ENCODE measurements at regions of chr1 and their contacts with region 1.

Region 1: DNA sequence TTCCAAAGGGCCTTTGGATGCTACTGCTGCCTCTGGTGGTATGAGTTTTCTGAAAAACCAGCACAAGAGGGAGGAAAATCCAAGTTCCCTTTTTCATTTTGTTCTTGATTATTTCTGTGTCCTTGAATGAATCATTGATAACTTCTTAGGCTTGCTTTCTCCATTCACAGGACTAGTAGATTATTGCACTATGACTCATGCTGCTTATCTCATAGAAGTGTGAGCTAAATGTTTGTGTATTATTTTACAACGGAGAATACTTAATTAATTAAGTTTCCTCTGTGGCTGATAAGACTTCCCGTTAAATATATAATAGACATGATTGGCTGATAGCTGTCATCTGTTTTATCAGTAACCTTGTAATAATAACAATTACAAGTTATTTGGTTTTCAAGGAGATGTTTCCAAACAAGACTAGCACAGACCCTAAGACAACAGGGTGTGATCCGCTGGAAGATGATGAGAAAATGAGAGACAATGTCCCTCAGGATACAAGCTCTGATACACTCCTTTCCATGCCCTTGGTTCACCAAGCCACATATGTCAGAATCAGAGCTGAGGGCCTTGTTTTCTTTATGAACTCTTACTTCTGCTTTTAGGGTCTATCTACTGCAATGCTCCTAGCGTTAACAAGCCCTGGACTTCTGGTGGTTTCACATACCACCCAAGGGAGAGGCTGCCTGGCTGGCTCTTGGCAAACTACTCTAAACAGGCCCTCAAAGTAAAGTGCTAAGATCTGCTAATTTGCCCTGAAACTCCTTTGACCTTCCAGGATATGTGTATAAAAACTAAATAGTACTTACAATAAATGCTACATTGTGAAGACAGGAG is 1078.3 kb downstream of the TTLL7 start:
- DNase-seq: peak; percentile 89
- H3K4me3 ChIP-seq: no peak overlapping the region
- H3K27ac ChIP-seq: peak overlapping the region; percentile 35
- H3K4me1 ChIP-seq: peaks cover 23% of the 10 kb centered on the region
- H3K27me3 ChIP-seq: peaks cover 16 to 25% of the 10 kb centered on the region in 2 experiments
- CTCF ChIP-seq: no peak
- POLR2A ChIP-seq: no peak

Region 2: DNA sequence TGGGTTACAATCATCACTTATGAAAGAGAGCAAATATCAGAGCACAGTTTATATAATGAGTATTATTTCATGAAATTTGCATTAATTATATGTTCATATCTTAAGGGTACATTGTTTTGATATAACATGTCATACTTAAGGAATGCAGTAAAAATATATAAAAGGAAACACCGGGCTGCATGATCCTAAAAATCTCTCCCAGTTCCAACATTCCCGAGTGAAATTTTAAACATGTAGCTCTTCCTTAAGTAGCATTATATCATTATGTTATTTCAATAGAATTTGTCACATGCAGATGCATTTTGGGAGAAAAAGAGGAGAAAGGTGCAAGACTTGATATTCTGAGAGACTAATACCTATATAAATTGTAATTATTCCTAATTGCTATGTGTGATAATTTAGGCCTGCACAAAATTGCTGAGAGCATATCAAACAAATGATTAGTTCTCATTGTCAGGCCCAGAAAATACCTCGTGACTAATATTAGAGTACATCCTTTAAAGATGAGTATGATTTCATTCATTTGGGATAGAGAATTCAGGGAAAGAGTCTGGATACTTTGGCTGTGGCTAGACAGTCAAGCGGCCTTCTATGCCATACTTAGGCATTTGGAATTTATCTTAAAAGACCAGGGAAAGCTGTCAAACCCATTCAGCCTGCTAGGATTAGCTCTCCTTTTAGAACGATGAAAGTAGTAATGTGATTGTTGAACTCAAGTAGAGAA is 1033.0 kb before region 1 on chr1:
- CTCF ChIA-PET with region 1: no interaction called
- POLR2A ChIA-PET with region 1: interaction called, 11 read pairs
- dilution Hi-C with region 1: no loop called
- intact Hi-C with region 1: no loop called
- DNase-seq: peak; percentile 84
- H3K4me3 ChIP-seq: no peak overlapping the region
- H3K27ac ChIP-seq: peak overlapping the region; percentile 69
- H3K4me1 ChIP-seq: peaks cover 17% of the 10 kb centered on the region
- H3K27me3 ChIP-seq: no peaks in the 10 kb centered on the region
- CTCF ChIP-seq: no peak
- POLR2A ChIP-seq: no peak

Region 3: DNA sequence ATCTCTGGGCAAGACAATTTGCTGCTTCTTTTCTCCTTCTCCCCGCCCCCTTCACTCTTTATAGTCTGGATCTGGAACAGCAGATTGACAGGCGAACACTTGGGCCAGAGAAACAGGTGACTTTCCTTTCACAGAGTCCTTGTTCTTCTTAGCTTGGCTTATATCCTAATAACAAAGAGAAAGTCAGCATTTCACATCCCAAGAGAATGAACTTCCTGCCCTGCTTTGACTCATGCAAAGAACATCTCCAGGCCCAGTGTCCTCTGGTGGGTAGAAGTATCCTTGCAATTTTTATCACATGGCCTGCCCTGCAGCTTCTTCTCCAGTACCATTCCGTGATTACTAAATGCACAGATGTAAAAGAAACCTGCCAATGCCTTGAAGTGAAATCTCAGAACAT is 355.5 kb before region 1 on chr1:
- CTCF ChIA-PET with region 1: no interaction called
- POLR2A ChIA-PET with region 1: no interaction called
- dilution Hi-C with region 1: no loop called
- intact Hi-C with region 1: loop called (anchors 5 kb)
- DNase-seq: no peak
- H3K4me3 ChIP-seq: no peak overlapping the region
- H3K27ac ChIP-seq: peak overlapping the region; percentile 22
- H3K4me1 ChIP-seq: peaks cover 11% of the 10 kb centered on the region
- H3K27me3 ChIP-seq: no peaks in the 10 kb centered on the region
- CTCF ChIP-seq: peak in 1 of 2 donors; percentile 6
- POLR2A ChIP-seq: no peak

Region 4: GRCh38 chr1:82792151-82792550 is 128.5 kb before region 1 on chr1:
- CTCF ChIA-PET with region 1: no interaction called
- POLR2A ChIA-PET with region 1: no interaction called
- dilution Hi-C with region 1: no loop called
- intact Hi-C with region 1: loop called (anchors 5 kb)
- DNase-seq: peak; percentile 83
- H3K4me3 ChIP-seq: no peak overlapping the region
- H3K27ac ChIP-seq: no peak overlapping the region
- H3K4me1 ChIP-seq: peaks cover 13% of the 10 kb centered on the region
- H3K27me3 ChIP-seq: no peaks in the 10 kb centered on the region
- CTCF ChIP-seq: no peak
- POLR2A ChIP-seq: no peak

Region 5: DNA sequence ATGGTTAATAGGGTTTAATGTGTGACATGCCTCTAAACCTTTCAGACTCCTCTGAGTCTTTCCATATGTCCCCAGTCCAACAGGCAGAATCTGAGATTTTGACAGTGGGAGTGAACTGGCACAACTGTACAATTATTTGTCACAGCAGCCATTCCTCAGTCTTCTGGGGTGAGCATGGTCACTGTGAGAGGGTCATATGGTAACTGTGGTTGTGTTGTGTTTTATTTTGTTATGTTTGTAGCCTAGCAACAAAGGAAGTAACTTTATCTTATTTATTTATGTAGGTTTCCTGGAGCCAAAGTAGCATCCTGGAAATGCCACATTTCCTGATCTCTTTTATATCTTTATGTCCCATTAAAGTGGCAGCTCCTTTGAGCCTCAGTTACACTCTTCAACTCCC is 10.4 kb after region 1 on chr1:
- CTCF ChIA-PET with region 1: interaction called, 8 read pairs
- POLR2A ChIA-PET with region 1: no interaction called
- dilution Hi-C with region 1: no loop called
- intact Hi-C with region 1: loop called (anchors 1 kb)
- DNase-seq: peak; percentile 72
- H3K4me3 ChIP-seq: no peak overlapping the region
- H3K27ac ChIP-seq: no peak overlapping the region
- H3K4me1 ChIP-seq: peaks cover 14% of the 10 kb centered on the region
- H3K27me3 ChIP-seq: peaks cover 20 to 21% of the 10 kb centered on the region in 2 experiments
- CTCF ChIP-seq: no peak
- POLR2A ChIP-seq: no peak